ENCODE measurements at regions of chr9 and their contacts with region 1.

Region 1: DNA sequence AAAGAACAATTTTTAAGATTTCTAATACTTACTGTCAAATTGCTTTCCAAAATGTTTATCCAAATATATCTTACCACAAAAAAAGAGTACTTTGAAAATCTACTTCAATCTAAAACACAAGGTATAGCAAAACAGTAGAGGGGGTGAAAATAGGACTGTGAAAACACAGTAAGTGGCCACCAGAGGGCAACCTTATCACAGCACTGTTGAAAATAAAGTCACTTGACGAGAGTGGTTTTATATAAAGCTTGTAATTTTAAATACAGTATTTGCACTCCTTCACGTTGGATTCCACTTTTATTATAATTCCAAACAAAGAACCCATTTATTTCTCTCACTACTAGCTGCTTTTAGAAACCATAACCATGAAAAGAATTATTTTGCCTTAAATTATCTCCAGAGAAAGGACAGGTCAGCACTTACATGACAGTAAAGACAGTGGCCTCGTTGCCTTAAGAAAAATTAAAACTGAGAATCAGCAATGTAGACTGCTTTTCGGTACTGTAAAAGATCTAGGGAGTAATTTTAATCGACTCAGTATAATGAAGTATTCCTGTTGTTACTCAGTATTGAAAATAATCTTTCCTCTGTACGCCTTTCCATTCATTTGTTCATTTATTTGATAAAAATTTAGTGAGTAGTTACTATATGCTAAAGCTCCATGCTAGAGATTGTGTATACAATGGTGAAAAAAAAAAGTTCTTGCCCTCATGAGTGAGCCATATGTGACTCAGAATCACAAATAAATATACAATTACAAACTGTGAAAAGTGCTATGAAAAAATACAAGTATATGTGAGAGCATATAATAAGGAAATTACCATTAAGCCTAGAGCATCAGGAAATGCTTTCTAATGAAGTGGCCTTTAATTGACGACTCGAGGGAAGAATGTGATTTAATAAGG is 40.0 kb upstream of the CDK5RAP2 start:
- DNase-seq: peak; percentile 75
- ATAC-seq: peak; percentile 94
- H3K4me3 ChIP-seq: no peak overlapping the region
- H3K27ac ChIP-seq: no peak overlapping the region
- H3K4me1 ChIP-seq: peaks cover 11% of the 10 kb centered on the region
- H3K27me3 ChIP-seq: no peaks in the 10 kb centered on the region
- CTCF ChIP-seq: peak; percentile 87

Region 2: DNA sequence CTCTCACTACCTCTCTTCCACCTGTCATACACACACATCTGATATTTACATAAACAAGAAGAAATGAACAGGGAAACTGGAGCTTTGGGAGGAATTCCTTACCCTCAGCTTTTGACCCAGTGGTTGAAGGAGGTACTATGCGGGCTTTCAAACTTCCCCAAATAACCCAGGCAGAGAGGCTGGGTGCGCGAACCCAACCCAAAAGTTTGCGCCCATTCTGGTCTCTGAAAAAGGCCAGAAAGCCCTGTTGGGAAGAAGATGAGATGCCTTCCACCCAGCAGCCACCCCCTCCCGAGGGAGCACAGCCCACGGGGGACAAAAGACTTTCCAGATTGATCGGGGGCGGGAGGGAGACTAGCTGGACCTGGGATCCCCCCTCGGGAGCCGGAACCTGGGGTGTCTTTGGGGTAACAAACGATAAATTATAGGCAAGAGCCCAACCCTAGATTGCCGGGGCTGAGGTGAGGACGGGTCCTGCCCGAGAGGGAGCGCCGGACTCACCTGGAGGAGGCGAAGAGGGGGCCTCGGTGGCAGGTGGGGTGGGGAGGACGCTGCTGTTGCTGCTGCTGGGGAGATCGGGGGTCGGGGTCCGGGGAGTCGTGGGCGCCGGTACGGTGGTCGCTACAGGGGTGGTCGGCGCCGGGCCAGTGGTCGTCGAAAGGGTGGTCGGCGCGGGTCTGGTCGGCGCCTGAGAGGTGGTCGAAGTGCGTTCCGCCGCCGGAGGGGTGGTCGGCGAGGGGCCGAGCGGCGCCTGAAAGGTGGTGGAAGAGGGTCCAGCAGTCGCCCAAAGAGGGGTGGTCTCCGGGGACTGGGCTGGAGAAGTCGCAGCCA is 93.5 kb after region 1 on chr9:
- CTCF ChIA-PET with region 1: interaction called, 4 read pairs
- POLR2A ChIA-PET with region 1: no interaction called
- intact Hi-C with region 1: loop called (anchors 1 kb)
- DNase-seq: peak; percentile 29
- ATAC-seq: no peak
- H3K4me3 ChIP-seq: peak overlapping the region; percentile 83
- H3K27ac ChIP-seq: no peak overlapping the region
- H3K4me1 ChIP-seq: peaks cover 41% of the 10 kb centered on the region
- H3K27me3 ChIP-seq: no peaks in the 10 kb centered on the region
- CTCF ChIP-seq: no peak

Region 3: DNA sequence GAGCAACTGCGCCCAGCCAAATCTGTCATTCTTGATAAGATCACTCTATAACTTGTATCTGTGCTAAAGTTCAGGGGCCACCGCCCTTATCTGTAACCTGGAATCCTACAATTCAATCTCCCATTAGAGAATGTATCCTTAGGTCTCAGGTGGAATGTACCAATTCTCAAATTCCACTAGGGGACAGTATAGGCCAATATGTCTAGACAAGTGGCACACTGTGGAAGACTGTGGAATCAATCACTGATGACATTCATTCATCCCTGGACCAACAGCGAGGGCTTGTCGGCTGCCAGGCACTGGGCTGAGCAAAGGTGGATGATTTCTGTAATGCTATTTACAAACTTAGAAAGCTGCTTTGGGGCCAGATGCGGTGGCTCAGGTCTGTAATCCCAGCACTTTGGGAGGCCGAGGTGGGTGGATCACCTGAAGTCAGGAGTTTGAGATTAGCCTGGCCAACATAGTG is 123.0 kb after region 1 on chr9:
- CTCF ChIA-PET with region 1: interaction called, 6 read pairs
- POLR2A ChIA-PET with region 1: no interaction called
- intact Hi-C with region 1: loop called (anchors 2 kb)
- DNase-seq: peak; percentile 70
- ATAC-seq: peak; percentile 76
- H3K4me3 ChIP-seq: no peak overlapping the region
- H3K27ac ChIP-seq: no peak overlapping the region
- H3K4me1 ChIP-seq: peaks cover 10% of the 10 kb centered on the region
- H3K27me3 ChIP-seq: no peaks in the 10 kb centered on the region
- CTCF ChIP-seq: peak; percentile 73

Region 4: DNA sequence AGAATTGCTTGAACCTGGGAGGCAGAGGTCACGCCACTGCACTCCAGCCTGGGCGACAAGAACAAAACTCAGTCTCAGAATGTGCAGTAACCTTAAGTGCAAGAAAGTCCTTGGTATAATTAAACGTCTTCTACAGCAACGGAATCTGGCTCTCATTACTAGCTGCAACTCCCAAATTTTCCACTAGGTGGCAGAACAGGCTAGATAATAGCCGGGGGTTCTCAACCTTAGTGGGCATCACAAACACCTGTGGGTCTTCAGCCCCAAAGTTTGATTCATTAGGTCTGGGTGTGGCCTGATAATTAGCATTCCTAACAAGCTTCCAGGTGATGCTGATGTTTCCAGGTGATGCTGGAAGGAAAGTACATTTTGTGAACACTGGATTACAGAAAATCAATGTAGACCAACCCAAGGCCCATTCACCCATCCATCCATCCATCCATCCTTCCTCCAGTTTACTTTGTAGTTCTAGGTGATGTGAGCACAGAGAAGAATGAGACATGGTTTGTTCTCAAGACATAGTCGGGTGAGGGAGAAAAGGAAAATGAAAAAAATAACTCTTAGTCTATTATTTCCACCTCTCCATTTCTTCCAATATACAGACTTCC is 135.9 kb after region 1 on chr9:
- CTCF ChIA-PET with region 1: no interaction called
- POLR2A ChIA-PET with region 1: no interaction called
- intact Hi-C with region 1: loop called (anchors 5 kb)
- DNase-seq: peak; percentile 73
- ATAC-seq: peak; percentile 50; the same call in 1 of the 2 replicates
- H3K4me3 ChIP-seq: no peak overlapping the region
- H3K27ac ChIP-seq: no peak overlapping the region
- H3K4me1 ChIP-seq: no peaks in the 10 kb centered on the region
- H3K27me3 ChIP-seq: no peaks in the 10 kb centered on the region
- CTCF ChIP-seq: peak; percentile 84

Region 5: DNA sequence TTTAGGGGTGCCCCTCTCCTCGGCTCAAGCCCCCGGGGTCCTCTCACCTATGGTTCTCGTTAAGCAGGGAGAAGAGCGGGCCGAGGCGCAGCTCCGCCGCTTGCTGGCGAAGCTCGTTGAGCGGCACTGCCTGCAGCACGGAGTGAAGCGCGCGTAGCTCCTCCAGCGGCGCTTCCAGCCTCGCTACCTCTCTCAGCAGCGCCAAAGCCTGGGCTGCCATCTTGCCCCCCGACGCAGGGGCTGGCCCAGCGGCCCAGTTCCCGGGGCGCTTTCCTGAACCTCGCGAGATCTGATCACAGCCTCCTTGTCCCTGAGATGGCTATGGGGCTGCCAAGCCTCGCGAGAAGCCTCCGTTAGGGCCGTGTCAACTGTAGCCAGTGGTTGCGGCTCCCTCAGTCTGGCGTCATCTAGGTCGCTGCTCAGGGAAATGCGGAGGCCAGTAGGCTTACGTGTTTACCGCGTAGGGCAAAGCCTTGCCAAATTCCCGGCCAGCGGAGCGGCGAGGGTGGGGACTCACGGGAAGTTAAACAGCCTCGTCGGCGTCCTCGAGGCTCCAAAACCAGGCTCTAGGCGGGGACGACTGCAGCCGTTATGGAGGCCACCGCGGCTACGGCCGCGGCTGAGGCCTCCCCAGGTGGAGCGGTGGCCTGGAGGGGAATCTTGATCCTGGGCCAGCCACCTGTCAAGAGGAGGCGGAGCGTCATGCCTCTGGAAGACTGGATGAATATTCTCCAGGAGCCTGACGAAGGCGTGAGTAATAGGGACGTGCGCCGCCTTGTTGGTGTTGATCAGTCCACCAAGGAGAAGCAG is 222.9 kb after region 1 on chr9 and contains the start of gene PSMD5:
- CTCF ChIA-PET with region 1: no interaction called
- POLR2A ChIA-PET with region 1: no interaction called
- intact Hi-C with region 1: loop called (anchors 5 kb)
- DNase-seq: peak; percentile 98
- ATAC-seq: peak; percentile 98
- H3K4me3 ChIP-seq: peak within 1 kb of the TSS; percentile 89
- H3K27ac ChIP-seq: peak within 1 kb of the TSS; percentile 90
- H3K4me1 ChIP-seq: no peaks in the 10 kb centered on the region; the same call in none of the 2 replicates
- H3K27me3 ChIP-seq: no peaks in the 10 kb centered on the region
- CTCF ChIP-seq: no peak
- total RNA-seq, gene PSMD5: 19.1 and 23.4 TPM in 2 replicates

Region 6: GRCh38 chr9:120936011-120936763 is 316.2 kb after region 1 on chr9:
- CTCF ChIA-PET with region 1: no interaction called
- POLR2A ChIA-PET with region 1: no interaction called
- intact Hi-C with region 1: loop called (anchors 10 kb)
- DNase-seq: peak; percentile 93
- ATAC-seq: peak; percentile 66
- H3K4me3 ChIP-seq: peak overlapping the region; percentile 38; the same call in 1 of the 2 replicates
- H3K27ac ChIP-seq: peak overlapping the region; percentile 74
- H3K4me1 ChIP-seq: peaks cover 48% of the 10 kb centered on the region
- H3K27me3 ChIP-seq: no peaks in the 10 kb centered on the region
- CTCF ChIP-seq: peak; percentile 91

Region 7: DNA sequence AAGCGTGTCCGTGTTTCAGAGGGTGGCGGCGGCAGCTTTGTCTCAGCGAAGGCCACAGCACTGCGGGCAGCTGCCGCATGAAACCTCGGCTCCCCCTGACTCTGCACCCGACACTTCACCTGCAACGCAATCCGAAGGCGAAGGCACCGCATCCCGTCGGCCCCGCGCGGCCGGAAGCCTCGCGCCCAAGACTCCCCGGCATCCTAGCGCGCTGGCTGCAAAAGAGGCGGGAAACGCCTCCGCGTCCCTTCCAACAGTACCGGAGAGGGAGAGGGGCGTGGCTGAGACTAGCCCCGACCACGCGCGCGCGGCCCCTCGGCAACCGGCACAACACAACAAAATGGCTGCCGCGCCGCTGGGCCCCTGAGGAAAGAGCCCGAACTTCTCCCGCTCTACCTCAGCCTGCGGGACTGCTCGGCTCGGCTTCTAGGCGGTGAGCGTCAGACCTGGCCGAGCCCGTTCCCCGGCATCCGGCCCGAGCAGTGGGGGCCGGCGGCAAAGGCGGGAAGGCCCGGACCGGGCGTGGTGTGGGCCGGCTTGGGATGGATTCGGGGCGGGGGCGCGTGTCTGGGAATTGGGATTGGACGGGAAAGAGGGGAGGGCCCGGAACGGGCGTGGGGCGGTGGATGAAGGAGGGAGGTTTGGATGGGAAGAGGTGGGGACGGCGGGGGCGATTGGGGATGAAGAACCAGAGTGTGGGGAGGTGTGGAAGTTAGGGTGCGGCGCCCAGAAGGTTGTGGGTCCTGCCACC is 454.8 kb after region 1 on chr9 and contains the start of gene CNTRL:
- CTCF ChIA-PET with region 1: no interaction called
- POLR2A ChIA-PET with region 1: no interaction called
- intact Hi-C with region 1: loop called (anchors 10 kb)
- DNase-seq: peak; percentile 81
- ATAC-seq: peak; percentile 84
- H3K4me3 ChIP-seq: peak within 1 kb of the TSS; percentile 79
- H3K27ac ChIP-seq: peak within 1 kb of the TSS; percentile 86
- H3K4me1 ChIP-seq: peaks cover 10% of the 10 kb centered on the region
- H3K27me3 ChIP-seq: no peaks in the 10 kb centered on the region
- CTCF ChIP-seq: no peak
- total RNA-seq, gene CNTRL: 6.0 and 7.9 TPM in 2 replicates